ENCODE measurements at regions of chr9 and their contacts with region 1.

Region 1: GRCh38 chr9:96391021-96391765 is 7.7 kb upstream of the SLC35D2 start:
- DNase-seq: peak; percentile 37
- ATAC-seq: peak; percentile 91
- H3K4me3 ChIP-seq: no peak overlapping the region
- H3K27ac ChIP-seq: peak overlapping the region; percentile 51; the same call in 1 of the 2 replicates
- H3K4me1 ChIP-seq: peaks cover 3% of the 10 kb centered on the region
- H3K27me3 ChIP-seq: no peaks in the 10 kb centered on the region
- CTCF ChIP-seq: no peak
- POLR2A ChIP-seq: no peak
- RAD21 ChIP-seq: no peak

Region 2: GRCh38 chr9:96376891-96377874 is 14.0 kb before region 1 on chr9:
- CTCF ChIA-PET with region 1: no interaction called
- POLR2A ChIA-PET with region 1: no interaction called
- dilution Hi-C with region 1: no loop called
- in situ Hi-C with region 1: no loop called
- intact Hi-C with region 1: no loop called
- DNase-seq: peak; percentile 38
- ATAC-seq: peak; percentile 40
- H3K4me3 ChIP-seq: no peak overlapping the region
- H3K27ac ChIP-seq: no peak overlapping the region
- H3K4me1 ChIP-seq: peaks cover 15% of the 10 kb centered on the region
- H3K27me3 ChIP-seq: no peaks in the 10 kb centered on the region
- CTCF ChIP-seq: no peak
- POLR2A ChIP-seq: no peak
- RAD21 ChIP-seq: no peak

Region 3: DNA sequence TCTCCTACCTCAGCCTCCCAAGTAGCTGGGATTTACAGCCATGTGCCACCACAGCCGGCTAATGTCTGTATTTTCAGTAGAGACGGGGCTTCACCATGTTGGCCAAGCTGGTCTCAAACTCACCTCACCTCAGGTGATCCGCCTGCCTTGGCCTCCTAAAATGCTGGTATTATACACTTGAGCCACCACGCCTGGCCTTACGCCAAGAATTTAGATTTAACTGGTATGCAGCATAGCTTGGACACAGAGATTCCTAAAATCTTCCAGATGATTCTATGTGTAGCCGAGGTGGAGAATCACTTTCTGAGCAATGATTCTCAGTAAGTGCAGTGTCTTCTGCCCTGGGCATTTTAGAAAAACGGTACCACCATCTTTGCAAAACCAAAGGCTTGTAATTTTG is 132.8 kb after region 1 on chr9:
- CTCF ChIA-PET with region 1: no interaction called
- POLR2A ChIA-PET with region 1: interaction called, 28 read pairs
- dilution Hi-C with region 1: no loop called
- in situ Hi-C with region 1: no loop called
- intact Hi-C with region 1: no loop called
- DNase-seq: no peak
- ATAC-seq: no peak
- H3K4me3 ChIP-seq: no peak overlapping the region
- H3K27ac ChIP-seq: no peak overlapping the region
- H3K4me1 ChIP-seq: no peaks in the 10 kb centered on the region
- H3K27me3 ChIP-seq: no peaks in the 10 kb centered on the region
- CTCF ChIP-seq: no peak
- POLR2A ChIP-seq: no peak
- RAD21 ChIP-seq: no peak

Region 4: GRCh38 chr9:97759581-97760288 is 1368.5 kb after region 1 on chr9:
- CTCF ChIA-PET with region 1: interaction called, 10 read pairs
- POLR2A ChIA-PET with region 1: no interaction called
- dilution Hi-C with region 1: no loop called
- in situ Hi-C with region 1: no loop called
- intact Hi-C with region 1: no loop called
- DNase-seq: no peak
- ATAC-seq: no peak; the same call in 1 of the 2 replicates
- H3K4me3 ChIP-seq: no peak overlapping the region
- H3K27ac ChIP-seq: no peak overlapping the region
- H3K4me1 ChIP-seq: no peaks in the 10 kb centered on the region
- H3K27me3 ChIP-seq: peaks cover 57% of the 10 kb centered on the region
- CTCF ChIP-seq: no peak
- POLR2A ChIP-seq: no peak
- RAD21 ChIP-seq: no peak

Measured in IMR-90 (cell line).